CD4-positive, alpha-beta memory T cell (primary cell): ENCODE measurements at regions of chr21 and their contacts with region 1.

Region 1: DNA sequence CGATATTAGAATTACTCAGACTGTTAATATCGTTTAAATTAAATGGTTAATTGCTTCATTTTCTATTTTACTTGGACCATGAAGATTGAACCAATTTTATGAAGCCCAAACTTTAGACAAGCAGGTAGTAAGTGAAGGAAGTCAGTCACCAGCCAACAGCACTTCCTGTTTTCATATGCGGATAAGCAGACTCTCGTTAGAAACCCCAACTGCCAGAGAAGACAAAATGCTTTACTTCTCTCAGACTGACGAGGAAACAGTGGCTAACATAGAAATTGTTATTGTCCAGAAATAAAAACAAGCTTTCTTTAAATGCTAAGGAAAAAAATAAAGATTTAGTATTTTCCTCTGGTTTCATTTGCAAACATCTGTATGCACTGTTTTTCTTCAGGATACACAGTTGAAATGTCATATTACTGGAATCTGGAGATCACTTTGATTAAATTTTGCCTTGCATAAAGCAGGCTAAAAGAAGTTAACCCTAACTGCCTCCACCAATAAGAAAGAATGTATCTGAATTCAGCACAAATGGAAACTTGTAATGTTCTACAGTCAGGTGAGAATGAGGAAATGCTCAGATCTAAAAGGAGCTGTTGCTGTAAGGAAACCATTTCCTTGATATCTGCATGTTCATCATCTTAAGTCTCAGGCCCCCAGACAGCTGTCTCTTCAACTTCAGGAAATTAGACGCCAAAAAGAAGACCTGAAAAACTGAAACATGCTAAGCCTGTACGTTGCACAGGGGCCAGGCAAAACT is 129.8 kb upstream of the SAMSN1 start:
- DNase-seq: peak; percentile 45 to 70 (median 62)
- H3K4me3 ChIP-seq: peak overlapping the region in 1 of 2 donors; percentile 37
- H3K4me3 Mint-ChIP-seq: peak overlapping the region; percentile 8 to 79 (median 54)
- H3K27ac ChIP-seq: peak overlapping the region; percentile 48
- H3K27ac Mint-ChIP-seq: peak overlapping the region; percentile 87 to 98 (median 94)
- H3K4me1 ChIP-seq: peaks cover 34% of the 10 kb centered on the region
- H3K4me1 Mint-ChIP-seq: peaks cover 33 to 45% (median 34%) of the 10 kb centered on the region in 4 donors
- H3K27me3 ChIP-seq: no peaks in the 10 kb centered on the region
- H3K27me3 Mint-ChIP-seq: no peaks in the 10 kb centered on the region

Region 2: GRCh38 chr21:14382835-14383594 is 292.9 kb before region 1 on chr21 and contains the start of gene HSPA13:
- CTCF ChIA-PET with region 1: no interaction called
- POLR2A ChIA-PET with region 1: interaction called, 9 read pairs
- intact Hi-C with region 1: loop called (anchors 2 kb)
- DNase-seq: peak; percentile 98 to 100 (median 99)
- H3K4me3 ChIP-seq: peak within 1 kb of the TSS; percentile 77 to 80
- H3K4me3 Mint-ChIP-seq: peak within 1 kb of the TSS; percentile 98 to 100 (median 100)
- H3K27ac ChIP-seq: peak within 1 kb of the TSS; percentile 84
- H3K27ac Mint-ChIP-seq: peak within 1 kb of the TSS; percentile 99 to 100 (median 100)
- H3K4me1 ChIP-seq: peaks cover 35% of the 10 kb centered on the region
- H3K4me1 Mint-ChIP-seq: peaks cover 16 to 51% (median 32%) of the 10 kb centered on the region in 4 donors
- H3K27me3 ChIP-seq: no peaks in the 10 kb centered on the region
- H3K27me3 Mint-ChIP-seq: no peaks in the 10 kb centered on the region
- total RNA-seq, gene HSPA13: 32.0 to 38.5 TPM

Region 3: DNA sequence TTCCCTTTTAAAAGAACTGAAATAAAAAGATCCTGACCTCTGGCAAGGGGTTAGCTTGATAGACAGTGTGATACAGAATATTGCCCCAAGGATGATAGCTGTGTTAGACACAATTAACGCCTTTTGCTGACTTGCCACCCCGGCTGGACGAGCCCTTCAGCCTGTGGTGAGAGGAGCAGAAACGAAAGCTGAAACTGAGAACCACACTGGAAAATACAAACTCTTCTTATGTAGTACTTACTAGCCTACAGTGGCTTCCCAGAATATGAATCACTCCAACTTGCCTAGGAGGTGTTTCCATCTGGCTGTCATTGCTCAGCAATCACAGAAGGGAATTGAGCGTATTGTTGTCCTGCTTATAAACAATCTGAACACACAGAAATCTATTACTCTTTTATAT is 152.7 kb before region 1 on chr21:
- CTCF ChIA-PET with region 1: interaction called, 3 read pairs
- POLR2A ChIA-PET with region 1: interaction called, 21 read pairs
- intact Hi-C with region 1: no loop called
- DNase-seq: peak in 2 of 5 donors; percentile 24 to 51
- H3K4me3 ChIP-seq: no peak overlapping the region
- H3K4me3 Mint-ChIP-seq: peak overlapping the region; percentile 16 to 92 (median 80)
- H3K27ac ChIP-seq: no peak overlapping the region
- H3K27ac Mint-ChIP-seq: peak overlapping the region; percentile 31 to 92 (median 77)
- H3K4me1 ChIP-seq: peaks cover 76% of the 10 kb centered on the region
- H3K4me1 Mint-ChIP-seq: peaks cover 46 to 70% (median 57%) of the 10 kb centered on the region in 4 donors
- H3K27me3 ChIP-seq: no peaks in the 10 kb centered on the region
- H3K27me3 Mint-ChIP-seq: no peaks in the 10 kb centered on the region

Region 4: DNA sequence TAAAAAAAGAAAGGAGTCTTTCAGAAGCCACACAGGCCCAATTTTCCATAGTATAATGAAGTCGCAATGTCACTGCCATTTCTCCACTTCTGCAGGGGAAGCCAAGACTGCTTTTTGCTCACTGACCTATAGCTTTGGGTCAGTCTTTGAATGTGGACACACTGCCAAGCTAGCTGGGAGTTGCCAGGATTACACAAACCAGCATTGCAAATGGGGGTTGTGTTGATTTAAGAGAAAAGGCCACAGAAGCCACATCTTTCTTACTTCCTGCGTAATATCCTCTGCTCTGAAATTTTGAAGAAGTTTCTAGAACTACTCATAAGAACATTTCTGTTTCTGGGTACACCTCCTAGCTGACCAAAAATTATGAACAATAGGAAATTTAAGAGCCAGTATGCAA is 84.1 kb before region 1 on chr21:
- CTCF ChIA-PET with region 1: interaction called, 3 read pairs
- POLR2A ChIA-PET with region 1: interaction called, 12 read pairs
- intact Hi-C with region 1: no loop called
- DNase-seq: peak in 3 of 5 donors; percentile 16 to 37 (median 29)
- H3K4me3 ChIP-seq: no peak overlapping the region
- H3K4me3 Mint-ChIP-seq: peak overlapping the region in 6 of 8 donors; percentile 5 to 49 (median 26)
- H3K27ac ChIP-seq: no peak overlapping the region
- H3K27ac Mint-ChIP-seq: peak overlapping the region in 6 of 7 donors; percentile 26 to 89 (median 64)
- H3K4me1 ChIP-seq: peaks cover 25% of the 10 kb centered on the region
- H3K4me1 Mint-ChIP-seq: peaks cover 21 to 31% (median 25%) of the 10 kb centered on the region in 4 donors
- H3K27me3 ChIP-seq: no peaks in the 10 kb centered on the region
- H3K27me3 Mint-ChIP-seq: no peaks in the 10 kb centered on the region

Region 5: GRCh38 chr21:14657241-14658008 is 18.5 kb before region 1 on chr21:
- CTCF ChIA-PET with region 1: no interaction called
- POLR2A ChIA-PET with region 1: no interaction called
- intact Hi-C with region 1: loop called (anchors 2 kb)
- DNase-seq: no peak
- H3K4me3 ChIP-seq: no peak overlapping the region
- H3K4me3 Mint-ChIP-seq: no peak overlapping the region
- H3K27ac ChIP-seq: no peak overlapping the region
- H3K27ac Mint-ChIP-seq: peak overlapping the region in 2 of 7 donors; percentile 9 to 22
- H3K4me1 ChIP-seq: no peaks in the 10 kb centered on the region
- H3K4me1 Mint-ChIP-seq: peaks cover 1 to 9% (median 5%) of the 10 kb centered on the region in 4 donors
- H3K27me3 ChIP-seq: no peaks in the 10 kb centered on the region
- H3K27me3 Mint-ChIP-seq: no peaks in the 10 kb centered on the region

Region 6: GRCh38 chr21:15514073-15514946 is 838.4 kb after region 1 on chr21:
- CTCF ChIA-PET with region 1: no interaction called
- POLR2A ChIA-PET with region 1: no interaction called
- intact Hi-C with region 1: loop called (anchors 10 kb)
- DNase-seq: peak; percentile 74 to 84 (median 77)
- H3K4me3 ChIP-seq: peak overlapping the region in 1 of 2 donors; percentile 39
- H3K4me3 Mint-ChIP-seq: peak overlapping the region; percentile 31 to 86 (median 66)
- H3K27ac ChIP-seq: peak overlapping the region; percentile 30
- H3K27ac Mint-ChIP-seq: peak overlapping the region; percentile 19 to 94 (median 87)
- H3K4me1 ChIP-seq: peaks cover 33% of the 10 kb centered on the region
- H3K4me1 Mint-ChIP-seq: peaks cover 17 to 26% (median 23%) of the 10 kb centered on the region in 4 donors
- H3K27me3 ChIP-seq: no peaks in the 10 kb centered on the region
- H3K27me3 Mint-ChIP-seq: no peaks in the 10 kb centered on the region